ENCODE measurements at regions of chr17 and their contacts with region 1.

Region 1: DNA sequence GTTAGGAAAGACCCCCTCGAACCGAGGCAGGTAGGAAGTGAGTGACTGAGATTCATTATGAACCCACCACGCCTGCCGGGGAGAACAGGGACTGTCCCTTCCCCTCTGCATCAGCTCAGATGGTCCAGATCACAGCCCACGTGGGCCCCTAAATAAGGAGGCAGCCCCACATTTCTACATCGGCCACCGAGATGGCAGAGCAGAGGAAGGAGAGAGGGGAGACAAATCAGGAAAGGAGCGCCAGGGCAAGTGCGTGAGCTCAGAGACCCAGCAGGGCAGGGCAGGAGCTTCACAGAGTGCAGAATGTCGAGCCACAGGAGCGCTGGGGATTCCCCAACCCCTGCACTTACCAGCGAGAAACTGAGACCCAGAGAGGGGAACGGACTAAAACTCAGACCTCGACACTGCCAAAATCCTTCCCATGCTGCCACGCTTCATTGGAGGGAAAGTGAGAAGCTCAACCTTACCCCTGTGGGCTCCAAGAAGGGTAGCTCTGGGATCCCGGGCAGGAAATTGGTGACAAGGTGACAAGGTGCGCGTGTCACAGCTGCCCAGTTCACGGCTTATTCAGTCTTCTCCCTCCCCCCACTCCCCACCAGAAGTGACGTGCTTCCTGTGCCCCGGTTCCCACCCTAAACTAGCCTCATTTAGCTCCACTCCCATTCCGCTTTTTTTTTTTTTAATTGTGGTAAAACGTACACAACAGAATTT is at the start of gene ICAM2:
- DNase-seq: peak; percentile 83
- H3K4me3 ChIP-seq: peak within 1 kb of the TSS; percentile 6 to 61 (median 30)
- H3K27ac ChIP-seq: peak within 1 kb of the TSS; percentile 74 to 84 (median 78)
- H3K4me1 ChIP-seq: peaks cover 0 to 14% (median 0%) of the 10 kb centered on the region in 4 donors
- H3K27me3 ChIP-seq: no peaks in the 10 kb centered on the region
- CTCF ChIP-seq: peak in 2 of 5 experiments; percentile 24 to 38
- EP300 ChIP-seq: no peak
- POLR2A ChIP-seq: peak; percentile 66
- total RNA-seq, gene ICAM2: 6.4 to 24.3 (median 9.3) TPM in 3 of 4 donors, not detected in the other

Region 2: DNA sequence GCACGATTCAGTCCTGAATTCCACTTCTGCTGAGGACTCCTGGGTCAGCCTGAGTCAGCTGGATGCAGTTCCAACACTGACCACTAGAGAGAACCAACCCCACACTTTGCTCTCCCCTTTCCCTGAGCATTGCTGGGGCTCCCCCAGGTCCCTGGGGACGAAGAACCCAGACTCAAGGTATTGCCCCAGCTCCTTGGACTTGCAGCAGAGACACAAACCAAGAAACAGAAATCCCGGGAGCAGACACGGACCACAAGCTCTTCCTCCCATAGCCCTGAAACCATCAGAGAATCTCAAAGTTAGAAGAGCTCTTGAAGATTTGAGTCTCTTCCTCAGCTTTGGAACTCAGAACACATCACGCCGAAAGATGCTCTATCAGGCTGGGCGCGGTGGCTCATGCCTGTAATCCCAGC is 100.9 kb before region 1 on chr17:
- in situ Hi-C with region 1: loop called in 3 of 4 experiments (anchors 10 to 25 kb)
- intact Hi-C with region 1: loop called (anchors 10 kb)
- DNase-seq: peak; percentile 69
- H3K4me3 ChIP-seq: no peak overlapping the region
- H3K27ac ChIP-seq: no peak overlapping the region
- H3K4me1 ChIP-seq: no peaks in the 10 kb centered on the region
- H3K27me3 ChIP-seq: no peaks in the 10 kb centered on the region
- CTCF ChIP-seq: peak; percentile 94 to 98 (median 95)
- EP300 ChIP-seq: no peak
- POLR2A ChIP-seq: no peak

Region 3: DNA sequence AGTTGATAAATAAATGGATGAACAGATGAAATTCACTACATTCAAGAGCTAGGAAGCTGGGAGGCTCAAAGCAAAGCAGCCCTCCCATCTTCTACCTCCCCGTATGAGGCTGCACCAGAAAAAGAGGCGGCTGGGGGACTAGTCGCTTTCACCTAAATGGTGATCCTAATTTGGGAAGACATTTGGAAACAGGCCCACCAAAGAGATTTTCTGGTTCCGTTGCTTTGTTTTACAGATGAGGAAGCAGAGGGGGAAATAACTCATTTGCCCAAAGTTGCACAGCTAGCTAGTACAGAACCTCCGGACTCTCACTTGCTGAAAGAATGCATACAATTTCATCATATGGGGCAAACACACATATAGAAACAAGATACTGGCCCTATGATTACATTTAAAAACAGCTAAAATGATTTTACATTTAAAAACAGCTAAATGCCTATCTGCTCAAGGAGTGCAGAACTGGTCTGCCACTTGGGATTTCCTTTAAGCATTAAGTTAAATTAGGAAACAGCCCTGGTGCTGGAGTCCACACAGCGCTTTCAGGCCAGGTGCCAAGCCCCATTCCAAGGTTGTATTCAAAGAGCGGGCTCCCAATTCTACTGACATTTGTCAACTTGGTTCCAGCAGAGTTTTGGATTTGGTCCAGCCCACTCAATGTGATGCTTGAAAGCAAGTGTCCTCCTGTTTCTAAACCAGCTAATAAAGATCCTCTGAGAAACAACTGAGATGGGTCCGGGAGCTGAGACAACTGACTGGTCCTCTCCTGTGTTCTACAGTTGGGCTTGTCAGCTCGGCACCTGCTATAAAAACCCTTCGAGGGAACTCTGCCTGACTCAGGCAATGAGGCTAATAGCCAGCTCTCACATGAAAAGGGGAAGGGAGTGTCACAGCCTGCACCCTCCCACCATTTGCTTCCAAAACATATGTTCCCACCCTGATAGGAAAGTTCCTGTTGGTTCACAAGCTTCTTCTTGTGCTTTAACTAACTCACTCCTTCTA is 98.1 kb after region 1 on chr17:
- in situ Hi-C with region 1: no loop called
- intact Hi-C with region 1: no loop called
- DNase-seq: peak; percentile 32
- H3K4me3 ChIP-seq: no peak overlapping the region
- H3K27ac ChIP-seq: peak overlapping the region; percentile 0 to 45 (median 16)
- H3K4me1 ChIP-seq: peaks cover 10 to 24% (median 16%) of the 10 kb centered on the region in 4 donors
- H3K27me3 ChIP-seq: no peaks in the 10 kb centered on the region
- CTCF ChIP-seq: no peak
- EP300 ChIP-seq: no peak
- POLR2A ChIP-seq: no peak

Region 4: GRCh38 chr17:64653325-64653984 is 633.2 kb after region 1 on chr17:
- in situ Hi-C with region 1: no loop called
- intact Hi-C with region 1: loop called (anchors 5 kb)
- DNase-seq: no peak
- H3K4me3 ChIP-seq: no peak overlapping the region
- H3K27ac ChIP-seq: peak overlapping the region in 2 of 4 donors; percentile 5 to 15
- H3K4me1 ChIP-seq: peaks cover 0 to 50% (median 8%) of the 10 kb centered on the region in 4 donors
- H3K27me3 ChIP-seq: no peaks in the 10 kb centered on the region
- CTCF ChIP-seq: no peak
- EP300 ChIP-seq: no peak
- POLR2A ChIP-seq: no peak